Heart left ventricle (tissue), 16 donors: ENCODE measurements at regions of chr13 and their contacts with region 1.

Region 1: DNA sequence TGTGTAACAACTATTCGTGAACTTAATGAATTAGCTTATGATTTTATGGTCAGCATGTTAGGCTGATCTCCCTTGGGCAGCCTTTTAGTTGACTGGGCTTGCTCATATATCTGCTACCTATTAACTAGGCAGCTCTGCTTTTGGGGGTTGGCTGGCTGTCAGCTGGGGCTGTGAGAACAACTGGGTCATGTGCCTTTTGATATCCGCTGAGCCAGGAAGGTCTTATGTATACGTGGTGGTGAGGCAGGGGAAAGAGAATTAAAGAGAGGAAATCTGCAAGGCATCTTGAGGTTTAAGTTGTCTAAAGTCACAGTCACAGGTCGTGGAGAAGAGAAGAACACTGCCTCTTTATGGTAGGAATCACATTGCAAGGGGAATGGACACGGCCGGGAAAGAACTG is 206.9 kb downstream of the LMO7 start:
- DNase-seq: peak in 1 of 5 donors; percentile 48
- ATAC-seq: peak; percentile 50 to 57 (median 54)
- H3K4me3 ChIP-seq: no peak overlapping the region
- H3K27ac ChIP-seq: no peak overlapping the region
- H3K4me1 ChIP-seq: peaks cover 0 to 12% (median 0%) of the 10 kb centered on the region in 12 donors
- H3K27me3 ChIP-seq: no peaks in the 10 kb centered on the region
- CTCF ChIP-seq: no peak
- POLR2A ChIP-seq: no peak

Region 2: DNA sequence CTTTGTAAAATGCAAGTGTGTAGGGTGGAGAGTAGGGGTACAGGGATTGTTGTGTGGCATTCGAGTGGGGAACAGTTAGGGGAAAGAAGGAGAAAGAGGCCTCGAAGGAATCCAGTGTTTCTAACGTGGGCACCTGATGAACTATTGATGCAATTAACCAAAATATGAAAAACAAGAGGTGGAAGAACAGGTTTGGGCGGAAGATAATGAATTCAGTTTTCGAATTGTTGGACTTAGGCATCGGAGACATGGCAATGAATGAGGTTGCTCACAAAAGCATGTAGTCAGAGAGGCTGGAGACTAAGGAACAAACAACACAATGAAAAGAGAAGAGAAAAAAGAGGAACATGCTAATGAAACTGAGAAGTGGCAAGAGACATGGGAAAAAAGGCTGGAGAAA is 14.2 kb before region 1 on chr13:
- intact Hi-C with region 1: loop called in 1 of 10 experiments (anchors 1 kb)
- DNase-seq: no peak
- ATAC-seq: no peak
- H3K4me3 ChIP-seq: no peak overlapping the region
- H3K27ac ChIP-seq: no peak overlapping the region
- H3K4me1 ChIP-seq: peaks cover 0 to 52% (median 5%) of the 10 kb centered on the region in 12 donors
- H3K27me3 ChIP-seq: no peaks in the 10 kb centered on the region
- CTCF ChIP-seq: no peak
- POLR2A ChIP-seq: no peak